Ovary (tissue), 10 donors: ENCODE measurements at regions of chr9 and their contacts with region 1.

Region 1: GRCh38 chr9:69131682-69132081 is 42.4 kb upstream of the TJP2 start:
- DNase-seq: peak in 1 of 5 donors; percentile 28
- H3K4me3 ChIP-seq: no peak overlapping the region
- H3K27ac ChIP-seq: no peak overlapping the region
- H3K4me1 ChIP-seq: peaks cover 6% of the 10 kb centered on the region
- H3K27me3 ChIP-seq: no peaks in the 10 kb centered on the region
- CTCF ChIP-seq: no peak
- EP300 ChIP-seq: no peak
- POLR2A ChIP-seq: no peak

Region 2: DNA sequence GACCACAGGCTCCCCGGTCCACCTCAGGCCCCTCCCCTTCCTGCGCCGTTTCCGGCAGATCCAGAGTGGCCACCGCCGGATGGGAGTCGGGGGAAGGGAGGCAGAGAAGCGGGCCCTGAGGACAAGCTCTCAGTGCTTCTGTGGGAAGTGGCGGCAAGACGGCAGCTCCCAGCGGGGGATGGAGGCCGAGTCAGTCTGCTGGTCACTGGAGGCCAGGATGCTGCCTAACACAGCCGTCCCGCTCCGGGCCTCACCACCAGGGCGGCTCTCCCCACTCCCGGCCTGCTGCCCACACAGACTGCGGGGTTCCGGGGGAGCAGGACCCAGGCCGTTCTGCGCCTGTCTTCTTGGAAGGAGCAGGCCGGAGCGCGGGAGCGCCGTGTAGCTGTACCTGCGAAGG is 64.7 kb before region 1 on chr9:
- intact Hi-C with region 1: loop called in 2 of 4 experiments (anchors 10 kb)
- DNase-seq: no peak
- H3K4me3 ChIP-seq: no peak overlapping the region
- H3K27ac ChIP-seq: no peak overlapping the region
- H3K4me1 ChIP-seq: no peaks in the 10 kb centered on the region
- H3K27me3 ChIP-seq: no peaks in the 10 kb centered on the region
- CTCF ChIP-seq: no peak
- EP300 ChIP-seq: no peak
- POLR2A ChIP-seq: no peak

Region 3: DNA sequence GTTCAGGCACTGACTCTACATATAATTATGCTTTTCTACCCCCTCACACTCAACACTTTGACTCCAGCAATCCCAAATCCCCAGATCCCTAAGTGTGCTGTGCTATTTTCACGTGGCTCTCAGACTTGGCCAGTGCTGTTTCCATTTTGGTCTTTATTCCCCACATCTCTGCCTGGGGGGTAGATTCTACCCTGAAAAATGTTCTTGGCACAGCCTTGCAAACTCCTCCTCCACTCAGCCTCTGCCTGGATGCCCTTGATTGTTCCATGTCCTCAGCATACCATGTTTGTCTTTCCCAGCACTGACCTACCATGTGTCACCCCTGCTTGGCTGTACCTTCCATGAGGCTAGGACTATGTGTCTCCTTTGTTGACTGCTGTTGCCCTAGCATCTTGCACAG is 53.1 kb before region 1 on chr9:
- intact Hi-C with region 1: loop called in 1 of 4 experiments (anchors 10 kb)
- DNase-seq: peak in 2 of 5 donors; percentile 37 to 49
- H3K4me3 ChIP-seq: no peak overlapping the region
- H3K27ac ChIP-seq: no peak overlapping the region
- H3K4me1 ChIP-seq: peaks cover 14% of the 10 kb centered on the region
- H3K27me3 ChIP-seq: no peaks in the 10 kb centered on the region
- CTCF ChIP-seq: no peak
- EP300 ChIP-seq: peak; percentile 64
- POLR2A ChIP-seq: no peak

Region 4: DNA sequence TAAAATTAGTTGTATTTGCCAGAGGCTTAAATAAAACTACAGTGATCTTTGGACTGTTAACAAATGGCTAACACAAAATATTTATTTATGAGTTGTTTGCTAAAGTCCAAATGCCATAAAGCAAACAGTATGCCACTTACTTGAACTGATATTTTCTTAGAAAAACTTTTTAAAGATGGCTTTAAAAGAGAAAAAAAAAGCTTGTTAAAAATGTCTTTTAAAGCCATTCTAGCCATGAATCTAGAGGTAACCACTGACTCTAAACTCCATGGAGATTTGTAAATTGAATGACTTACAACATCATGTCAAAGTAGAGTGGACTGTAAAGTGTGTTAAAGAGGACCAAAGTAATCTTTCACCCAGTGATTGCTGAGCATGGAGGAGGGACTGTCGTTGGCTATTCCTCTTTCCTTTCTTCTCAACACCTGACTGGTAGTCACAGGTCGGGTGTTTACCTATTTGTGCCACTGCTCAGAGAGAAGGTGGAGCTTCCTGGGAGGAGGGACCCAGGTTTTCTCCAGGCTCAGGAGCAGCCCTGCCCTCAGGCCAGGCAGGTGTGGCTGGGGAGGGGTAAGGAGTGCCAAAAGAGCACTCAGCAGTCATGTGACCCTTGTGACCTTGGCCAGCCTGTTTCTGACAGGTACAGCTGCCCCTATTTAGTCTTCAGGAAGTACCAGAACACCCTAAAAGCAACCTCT is 26.7 kb before region 1 on chr9:
- intact Hi-C with region 1: loop called in 1 of 4 experiments (anchors 1 kb)
- DNase-seq: no peak
- H3K4me3 ChIP-seq: no peak overlapping the region
- H3K27ac ChIP-seq: no peak overlapping the region
- H3K4me1 ChIP-seq: no peaks in the 10 kb centered on the region
- H3K27me3 ChIP-seq: no peaks in the 10 kb centered on the region
- CTCF ChIP-seq: no peak
- EP300 ChIP-seq: no peak
- POLR2A ChIP-seq: no peak

Region 5: GRCh38 chr9:69199769-69200470 is 68.2 kb after region 1 on chr9:
- intact Hi-C with region 1: loop called in 2 of 4 experiments (anchors 10 kb)
- DNase-seq: peak in 2 of 5 donors; percentile 71
- H3K4me3 ChIP-seq: no peak overlapping the region
- H3K27ac ChIP-seq: peak overlapping the region in 1 of 2 donors; percentile 46
- H3K4me1 ChIP-seq: peaks cover 20% of the 10 kb centered on the region
- H3K27me3 ChIP-seq: no peaks in the 10 kb centered on the region
- CTCF ChIP-seq: no peak
- EP300 ChIP-seq: no peak
- POLR2A ChIP-seq: no peak

Region 6: DNA sequence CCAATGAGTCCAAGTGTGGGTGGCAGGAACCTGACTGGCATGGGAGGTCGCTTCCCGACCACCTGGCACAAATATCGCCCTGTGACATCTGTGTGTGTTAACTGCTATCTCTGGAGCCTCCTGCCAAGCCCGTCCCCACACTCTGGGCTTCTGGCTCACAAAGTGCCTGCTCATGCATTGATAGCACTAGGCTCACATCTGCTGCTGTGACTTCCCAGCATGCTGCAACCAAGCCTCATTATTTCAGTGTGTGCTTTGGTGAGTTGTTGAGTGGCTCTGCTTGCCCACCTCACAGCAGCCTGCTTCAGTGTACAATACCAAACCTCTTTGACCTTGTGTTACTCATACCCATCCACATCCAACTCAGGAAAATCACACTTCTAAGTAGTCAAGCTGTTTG is 400.7 kb after region 1 on chr9:
- intact Hi-C with region 1: loop called in 1 of 4 experiments (anchors 10 kb)
- DNase-seq: no peak
- H3K4me3 ChIP-seq: no peak overlapping the region
- H3K27ac ChIP-seq: no peak overlapping the region
- H3K4me1 ChIP-seq: no peaks in the 10 kb centered on the region
- H3K27me3 ChIP-seq: no peaks in the 10 kb centered on the region
- CTCF ChIP-seq: no peak
- EP300 ChIP-seq: no peak
- POLR2A ChIP-seq: no peak